Prostate gland (tissue), 2 donors: ENCODE measurements at regions of chr3 and their contacts with region 1.

Region 1: DNA sequence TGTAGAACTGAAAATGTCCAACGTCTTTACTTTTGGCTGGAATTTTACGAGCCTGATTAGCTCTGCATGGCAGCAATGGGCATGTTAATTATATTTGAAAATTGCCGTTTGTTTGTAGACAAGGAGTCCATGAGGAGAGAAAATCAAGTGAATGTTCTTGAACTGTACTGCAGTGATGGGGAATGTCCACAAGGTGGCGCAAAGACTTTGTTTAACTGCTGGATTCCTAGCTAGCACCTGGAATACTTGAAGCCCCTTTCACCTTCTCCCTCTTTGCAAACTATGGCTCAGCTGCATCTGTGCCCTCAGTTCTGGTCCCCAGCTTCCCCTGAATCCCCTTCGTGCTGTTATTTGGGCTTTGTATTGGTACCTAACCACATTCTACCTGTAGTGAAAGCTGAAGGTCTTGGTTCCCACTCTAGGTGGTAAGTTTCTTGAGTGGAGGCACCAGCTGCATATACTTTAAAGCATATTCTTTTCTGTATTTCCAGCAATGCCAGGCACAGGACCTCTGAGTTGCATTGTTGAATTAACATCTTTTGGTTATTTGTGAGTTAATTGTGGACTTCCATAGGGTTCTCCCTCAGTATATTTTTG is 25.3 kb downstream of the EXOG start:
- DNase-seq: peak; percentile 60
- H3K4me3 ChIP-seq: no peak overlapping the region
- H3K27ac ChIP-seq: no peak overlapping the region
- H3K4me1 ChIP-seq: no peaks in the 10 kb centered on the region
- H3K27me3 ChIP-seq: no peaks in the 10 kb centered on the region
- CTCF ChIP-seq: peak; percentile 80 to 90 (median 84)
- POLR2A ChIP-seq: no peak

Region 2: GRCh38 chr3:37492977-37493471 is 1028.5 kb before region 1 on chr3:
- intact Hi-C with region 1: no loop called
- DNase-seq: no peak
- H3K4me3 ChIP-seq: no peak overlapping the region
- H3K27ac ChIP-seq: no peak overlapping the region
- H3K4me1 ChIP-seq: no peaks in the 10 kb centered on the region
- H3K27me3 ChIP-seq: no peaks in the 10 kb centered on the region
- CTCF ChIP-seq: no peak
- POLR2A ChIP-seq: no peak

Region 3: GRCh38 chr3:38101811-38102443 is 419.6 kb before region 1 on chr3:
- intact Hi-C with region 1: no loop called
- DNase-seq: no peak
- H3K4me3 ChIP-seq: no peak overlapping the region
- H3K27ac ChIP-seq: no peak overlapping the region
- H3K4me1 ChIP-seq: no peaks in the 10 kb centered on the region
- H3K27me3 ChIP-seq: no peaks in the 10 kb centered on the region
- CTCF ChIP-seq: no peak
- POLR2A ChIP-seq: no peak

Region 4: DNA sequence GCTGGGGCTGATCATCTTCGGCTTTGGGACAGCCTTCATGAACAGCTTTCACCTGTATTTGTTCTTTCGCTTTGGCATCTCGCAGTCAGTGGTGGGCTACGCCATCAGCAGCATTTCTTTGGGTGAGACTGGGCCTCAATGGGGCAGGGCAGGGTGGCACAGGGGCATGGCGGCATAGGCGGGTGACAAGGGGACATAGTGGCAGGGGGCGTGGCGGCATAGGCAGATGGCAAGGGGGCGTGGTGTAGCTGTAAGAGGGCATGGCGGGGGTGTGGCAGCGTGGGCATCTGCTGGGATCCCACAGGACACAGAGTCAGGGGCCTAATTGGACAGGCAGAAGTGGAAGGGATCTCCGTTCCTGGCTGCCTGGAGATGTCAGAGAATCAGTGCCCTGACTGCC is 213.9 kb before region 1 on chr3:
- intact Hi-C with region 1: no loop called
- DNase-seq: no peak
- H3K4me3 ChIP-seq: no peak overlapping the region
- H3K27ac ChIP-seq: no peak overlapping the region
- H3K4me1 ChIP-seq: no peaks in the 10 kb centered on the region
- H3K27me3 ChIP-seq: no peaks in the 10 kb centered on the region
- CTCF ChIP-seq: no peak
- POLR2A ChIP-seq: no peak

Region 5: GRCh38 chr3:38651154-38651789 is 129.8 kb after region 1 on chr3:
- intact Hi-C with region 1: loop called (anchors 1 kb)
- DNase-seq: peak; percentile 59
- H3K4me3 ChIP-seq: no peak overlapping the region
- H3K27ac ChIP-seq: no peak overlapping the region
- H3K4me1 ChIP-seq: no peaks in the 10 kb centered on the region
- H3K27me3 ChIP-seq: no peaks in the 10 kb centered on the region
- CTCF ChIP-seq: peak; percentile 83 to 90 (median 84)
- POLR2A ChIP-seq: no peak

Region 6: DNA sequence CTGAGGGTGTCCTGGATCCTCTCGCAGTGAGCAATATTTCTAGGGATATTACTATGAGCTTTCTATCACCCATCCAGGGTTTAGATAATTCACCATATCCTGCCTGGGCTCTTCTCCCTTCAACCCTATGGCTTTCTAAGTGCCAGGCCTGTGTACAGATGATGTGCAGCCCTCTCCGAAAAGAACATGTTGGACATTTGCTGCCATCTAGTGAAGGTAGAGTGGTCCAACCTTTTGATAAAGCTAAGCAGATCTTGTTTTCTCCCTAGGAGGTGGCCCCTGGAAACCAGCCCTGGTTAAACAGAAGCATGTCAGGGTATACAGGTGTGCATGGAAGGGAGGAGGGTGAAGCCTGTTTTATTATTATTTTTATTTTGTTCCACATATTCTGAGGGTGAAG is 322.4 kb after region 1 on chr3:
- intact Hi-C with region 1: loop called (anchors 5 kb)
- DNase-seq: no peak
- H3K4me3 ChIP-seq: no peak overlapping the region
- H3K27ac ChIP-seq: no peak overlapping the region
- H3K4me1 ChIP-seq: no peaks in the 10 kb centered on the region
- H3K27me3 ChIP-seq: no peaks in the 10 kb centered on the region
- CTCF ChIP-seq: peak in 2 of 4 experiments; percentile 8 to 37
- POLR2A ChIP-seq: no peak

Region 7: DNA sequence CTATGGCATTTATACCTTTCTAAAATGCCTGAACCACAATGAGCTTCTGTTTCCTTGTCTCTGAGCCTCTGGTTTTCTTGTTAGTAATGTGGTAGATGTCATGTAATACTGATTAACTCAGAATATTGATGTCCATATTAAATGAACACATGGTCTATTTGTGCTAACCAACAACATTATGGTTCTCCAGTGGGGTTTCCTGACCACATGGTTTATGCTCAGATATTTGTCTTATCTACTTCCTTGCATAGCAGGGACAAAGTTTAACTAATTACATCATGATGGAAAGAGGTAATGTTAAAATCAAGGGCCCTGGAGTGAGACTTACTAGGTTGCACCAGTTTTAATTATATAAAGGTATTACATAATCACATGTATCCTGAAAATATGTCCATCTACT is 357.2 kb after region 1 on chr3:
- intact Hi-C with region 1: no loop called
- DNase-seq: no peak
- H3K4me3 ChIP-seq: no peak overlapping the region
- H3K27ac ChIP-seq: no peak overlapping the region
- H3K4me1 ChIP-seq: no peaks in the 10 kb centered on the region
- H3K27me3 ChIP-seq: no peaks in the 10 kb centered on the region
- CTCF ChIP-seq: no peak
- POLR2A ChIP-seq: no peak

Region 8: GRCh38 chr3:39021029-39021428 is 499.5 kb after region 1 on chr3:
- intact Hi-C with region 1: loop called (anchors 10 kb)
- DNase-seq: no peak
- H3K4me3 ChIP-seq: no peak overlapping the region
- H3K27ac ChIP-seq: no peak overlapping the region
- H3K4me1 ChIP-seq: no peaks in the 10 kb centered on the region
- H3K27me3 ChIP-seq: no peaks in the 10 kb centered on the region
- CTCF ChIP-seq: no peak
- POLR2A ChIP-seq: no peak